Panc1 (cell line): ENCODE measurements at regions of chr10 and their contacts with region 1.

Region 1: DNA sequence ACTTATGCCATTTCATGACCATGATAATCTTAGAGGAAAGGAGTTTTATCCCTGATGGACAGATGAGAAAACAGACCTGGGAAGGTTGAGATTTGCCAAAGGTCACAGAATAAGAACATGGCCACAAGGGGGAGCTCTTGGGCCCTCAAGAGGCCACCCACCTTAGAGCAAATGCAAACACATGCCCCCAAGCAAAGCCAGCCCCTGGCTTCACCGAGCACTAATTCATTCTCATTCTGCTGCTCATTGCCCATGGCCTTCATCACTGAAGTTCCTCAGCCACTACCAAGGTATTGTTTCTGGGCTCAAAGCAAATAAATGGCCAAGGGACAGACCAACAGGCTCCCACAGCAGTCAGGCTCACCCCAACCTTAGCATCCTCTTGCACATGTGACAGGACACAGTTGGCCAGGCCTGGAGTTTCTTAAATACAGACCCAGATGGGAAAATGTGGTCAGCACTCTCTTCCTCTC is 44.2 kb downstream of the PDLIM1 start:
- DNase-seq: no peak
- ATAC-seq: peak; percentile 84
- H3K4me3 ChIP-seq: no peak overlapping the region
- H3K27ac ChIP-seq: no peak overlapping the region
- H3K4me1 ChIP-seq: peaks cover 30% of the 10 kb centered on the region
- H3K27me3 ChIP-seq: no peaks in the 10 kb centered on the region
- CTCF ChIP-seq: peak; percentile 95

Region 2: GRCh38 chr10:94630017-94630688 is 616.5 kb before region 1 on chr10:
- CTCF ChIA-PET with region 1: interaction called, 3 read pairs
- POLR2A ChIA-PET with region 1: no interaction called
- in situ Hi-C with region 1: no loop called
- intact Hi-C with region 1: loop called (anchors 10 kb)
- DNase-seq: peak; percentile 28
- ATAC-seq: peak; percentile 65
- H3K4me3 ChIP-seq: no peak overlapping the region
- H3K27ac ChIP-seq: no peak overlapping the region
- H3K4me1 ChIP-seq: no peaks in the 10 kb centered on the region
- H3K27me3 ChIP-seq: no peaks in the 10 kb centered on the region
- CTCF ChIP-seq: peak; percentile 69

Region 3: DNA sequence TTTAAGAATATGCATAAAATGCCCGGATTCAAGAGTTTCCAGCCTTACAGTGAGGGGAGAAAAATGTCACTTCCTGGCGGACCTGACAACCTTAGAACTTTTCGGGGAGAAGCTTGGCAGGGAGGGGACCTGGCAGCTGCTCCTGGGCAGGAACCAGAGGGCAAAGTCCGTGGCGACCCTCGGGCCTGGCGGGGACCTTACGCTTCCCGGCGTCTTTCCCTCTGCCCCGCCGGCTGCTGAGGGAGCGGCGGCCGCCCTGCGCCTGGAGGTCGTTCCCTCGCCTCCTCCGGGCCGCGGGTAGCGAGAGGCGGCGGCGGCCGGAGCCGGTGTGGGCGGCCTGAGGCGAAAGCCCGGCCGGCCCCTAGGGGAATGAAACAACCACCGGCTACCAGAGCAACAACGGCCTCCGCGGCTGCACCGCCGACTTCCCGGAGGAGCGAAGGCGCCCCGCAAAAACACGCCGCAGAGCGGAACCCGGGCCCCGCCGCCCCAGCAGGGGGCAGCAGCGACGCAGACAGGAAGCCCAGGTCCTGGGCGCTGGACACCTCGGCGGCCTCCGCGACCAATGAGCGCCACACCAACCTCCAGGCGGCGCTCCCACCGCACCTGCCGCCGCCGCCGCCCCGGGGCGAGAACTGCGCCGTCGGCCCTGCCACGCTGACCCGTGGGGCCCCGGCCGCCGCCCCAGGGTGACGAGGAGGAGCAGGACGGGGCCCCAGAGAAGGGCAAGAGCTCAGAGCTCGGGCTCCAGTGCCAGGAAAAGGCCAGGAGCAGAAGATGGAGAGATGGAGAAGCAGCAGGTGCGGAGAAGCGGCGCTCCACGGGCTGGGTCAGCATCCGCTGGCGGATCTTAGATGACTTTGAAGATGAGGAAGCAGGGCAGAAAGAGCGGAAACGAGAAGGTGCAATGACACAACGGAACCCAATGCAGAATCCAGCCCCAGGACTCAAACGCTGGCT is 63.1 kb before region 1 on chr10:
- CTCF ChIA-PET with region 1: interaction called, 7 read pairs
- POLR2A ChIA-PET with region 1: no interaction called
- in situ Hi-C with region 1: no loop called
- intact Hi-C with region 1: loop called (anchors 1 kb)
- DNase-seq: no peak
- ATAC-seq: peak; percentile 100
- H3K4me3 ChIP-seq: peak overlapping the region; percentile 63 to 79
- H3K27ac ChIP-seq: peak overlapping the region; percentile 92
- H3K4me1 ChIP-seq: peaks cover 3% of the 10 kb centered on the region; the same call in 1 of the 2 replicates
- H3K27me3 ChIP-seq: peaks cover 5% of the 10 kb centered on the region; the same call in 1 of the 2 replicates
- CTCF ChIP-seq: peak; percentile 100

Region 4: DNA sequence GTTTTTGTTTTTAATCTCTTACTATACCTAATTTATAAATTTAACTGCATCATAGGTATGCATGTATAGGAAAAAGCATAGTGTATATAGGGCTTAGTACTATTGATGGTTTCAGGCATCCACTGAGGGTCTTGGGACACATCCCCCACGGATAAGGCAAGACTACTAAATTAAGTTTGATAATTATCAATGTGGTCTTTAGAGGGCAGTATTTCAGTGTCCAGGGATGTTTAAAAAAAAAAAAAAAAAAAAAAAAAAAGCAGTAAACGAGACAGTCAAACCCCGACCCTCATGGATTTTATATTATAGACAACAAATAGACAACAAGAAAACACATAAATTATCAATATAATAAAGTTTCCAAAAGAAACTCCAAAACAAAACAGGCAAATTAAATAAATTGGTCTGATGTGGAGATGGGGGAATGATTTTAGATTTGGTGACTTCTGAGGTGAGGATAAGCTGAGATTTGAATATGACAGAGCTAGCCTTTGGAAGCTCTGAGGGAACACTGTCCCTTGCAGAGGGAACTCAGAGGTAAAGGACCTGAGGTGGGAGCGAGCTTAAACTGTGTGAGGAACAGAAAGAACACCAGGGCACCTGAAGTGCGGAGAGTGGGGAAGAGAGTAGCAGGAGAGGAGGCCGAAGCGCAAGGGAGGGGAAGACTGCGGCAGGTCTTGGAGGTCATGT is 37.8 kb before region 1 on chr10:
- CTCF ChIA-PET with region 1: no interaction called
- POLR2A ChIA-PET with region 1: interaction called, 3 read pairs
- in situ Hi-C with region 1: no loop called
- intact Hi-C with region 1: loop called (anchors 5 kb)
- DNase-seq: no peak
- ATAC-seq: peak; percentile 50
- H3K4me3 ChIP-seq: no peak overlapping the region
- H3K27ac ChIP-seq: peak overlapping the region; percentile 64
- H3K4me1 ChIP-seq: peaks cover 9% of the 10 kb centered on the region; the same call in 1 of the 2 replicates
- H3K27me3 ChIP-seq: no peaks in the 10 kb centered on the region
- CTCF ChIP-seq: peak; percentile 72; the same call in 1 of the 2 replicates

Region 5: GRCh38 chr10:95467162-95467599 is 220.6 kb after region 1 on chr10:
- CTCF ChIA-PET with region 1: no interaction called
- POLR2A ChIA-PET with region 1: no interaction called
- in situ Hi-C with region 1: no loop called
- intact Hi-C with region 1: no loop called
- DNase-seq: no peak
- ATAC-seq: peak; percentile 80
- H3K4me3 ChIP-seq: no peak overlapping the region
- H3K27ac ChIP-seq: peak overlapping the region; percentile 44; the same call in 1 of the 2 replicates
- H3K4me1 ChIP-seq: peaks cover 37% of the 10 kb centered on the region
- H3K27me3 ChIP-seq: no peaks in the 10 kb centered on the region
- CTCF ChIP-seq: no peak